CD4-positive, alpha-beta memory T cell (primary cell): ENCODE measurements at regions of chr19 and their contacts with region 1.

Region 1: GRCh38 chr19:5031231-5032100 is 62.6 kb downstream of the KDM4B start:
- DNase-seq: peak; percentile 67 to 80 (median 71)
- H3K4me3 ChIP-seq: no peak overlapping the region
- H3K4me3 Mint-ChIP-seq: no peak overlapping the region
- H3K27ac ChIP-seq: no peak overlapping the region
- H3K27ac Mint-ChIP-seq: peak overlapping the region in 1 of 7 donors; percentile 18
- H3K4me1 ChIP-seq: peaks cover 7% of the 10 kb centered on the region
- H3K4me1 Mint-ChIP-seq: peaks cover 0 to 17% (median 7%) of the 10 kb centered on the region in 4 donors
- H3K27me3 ChIP-seq: no peaks in the 10 kb centered on the region
- H3K27me3 Mint-ChIP-seq: no peaks in the 10 kb centered on the region

Region 2: DNA sequence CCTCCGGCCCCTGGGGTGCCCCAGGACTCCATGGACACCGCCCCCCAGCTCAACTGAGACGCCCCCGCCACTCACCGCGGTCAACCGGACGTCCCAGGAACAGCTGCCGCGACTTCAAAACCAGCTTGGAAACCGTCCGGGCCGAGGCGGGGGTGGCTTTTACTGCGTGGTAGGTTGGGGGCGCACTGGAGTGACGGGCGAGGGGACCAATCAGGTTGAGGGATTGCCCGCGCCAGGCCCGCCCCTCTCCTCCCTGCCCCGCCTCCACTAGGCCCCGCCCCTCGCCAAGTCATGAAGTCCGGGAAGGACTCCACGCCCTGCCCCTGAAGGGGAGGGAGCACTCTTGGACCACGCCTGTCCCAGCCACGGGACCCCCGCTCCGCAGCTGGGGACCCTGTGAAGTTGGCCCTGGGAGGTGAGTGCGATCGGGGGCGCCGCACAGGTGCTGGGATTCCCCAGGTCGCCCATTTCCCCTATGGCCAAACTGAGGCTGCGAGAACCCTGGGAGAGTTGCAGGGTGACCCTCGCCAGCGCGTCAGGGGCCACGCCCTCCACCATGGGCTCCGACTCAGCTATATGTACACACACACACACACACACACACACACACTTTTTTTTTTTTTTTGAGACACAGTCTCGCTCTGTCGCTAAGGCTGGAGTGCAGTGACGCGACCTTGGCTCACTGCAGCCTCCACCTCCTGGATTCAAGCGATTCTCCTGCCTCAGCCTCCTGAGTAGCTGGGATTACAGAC is 163.8 kb before region 1 on chr19 and contains the start of gene PLIN3:
- CTCF ChIA-PET with region 1: interaction called, 89 read pairs
- POLR2A ChIA-PET with region 1: interaction called, 5 read pairs
- intact Hi-C with region 1: no loop called
- DNase-seq: peak; percentile 78 to 89 (median 79)
- H3K4me3 ChIP-seq: peak within 1 kb of the TSS; percentile 60 to 76
- H3K4me3 Mint-ChIP-seq: peak within 1 kb of the TSS; percentile 85 to 92 (median 86)
- H3K27ac ChIP-seq: peak within 1 kb of the TSS; percentile 74
- H3K27ac Mint-ChIP-seq: peak within 1 kb of the TSS; percentile 79 to 91 (median 87)
- H3K4me1 ChIP-seq: peaks cover 10% of the 10 kb centered on the region
- H3K4me1 Mint-ChIP-seq: peaks cover 10 to 21% (median 14%) of the 10 kb centered on the region in 4 donors
- H3K27me3 ChIP-seq: no peaks in the 10 kb centered on the region
- H3K27me3 Mint-ChIP-seq: peaks cover 2 to 3% of the 10 kb centered on the region in 2 donors
- total RNA-seq, gene PLIN3: 16.0 to 18.2 TPM

Region 3: DNA sequence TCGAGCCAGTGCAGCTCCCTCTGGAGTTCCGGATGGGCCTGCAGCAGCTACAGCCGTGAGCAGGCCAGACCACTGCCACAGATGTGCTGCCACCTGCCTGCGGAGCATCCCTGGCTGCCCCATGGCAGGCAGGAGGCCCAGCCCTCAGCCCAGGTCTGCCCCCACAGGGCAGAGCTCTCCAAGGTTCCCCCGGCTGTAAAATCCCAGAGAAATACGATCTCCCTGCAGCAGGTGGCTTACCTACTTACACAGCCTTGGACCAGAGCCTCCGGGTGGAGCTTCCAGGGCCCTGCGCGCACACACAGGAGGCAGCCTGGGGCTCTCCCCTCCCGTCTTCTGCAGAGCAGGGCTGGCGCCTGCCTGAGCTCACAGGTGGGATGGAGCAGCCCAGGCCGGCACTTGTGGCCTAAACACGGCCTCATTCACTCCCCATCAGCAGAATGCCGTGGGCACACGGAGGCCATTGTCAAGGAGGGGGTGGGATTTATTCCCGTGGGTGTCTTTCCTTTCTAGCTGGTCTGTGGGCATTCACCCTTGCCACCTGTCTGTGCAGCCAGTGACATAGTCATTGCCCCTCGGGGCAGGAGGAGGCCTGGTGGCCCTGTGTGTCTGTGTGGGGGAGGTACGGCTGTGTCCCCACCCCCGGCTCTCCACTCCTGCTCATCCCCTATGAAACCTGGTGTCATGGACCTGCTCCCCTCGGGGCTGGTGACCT is 55.4 kb after region 1 on chr19:
- CTCF ChIA-PET with region 1: no interaction called
- POLR2A ChIA-PET with region 1: no interaction called
- intact Hi-C with region 1: no loop called
- DNase-seq: no peak
- H3K4me3 ChIP-seq: no peak overlapping the region
- H3K4me3 Mint-ChIP-seq: no peak overlapping the region
- H3K27ac ChIP-seq: no peak overlapping the region
- H3K27ac Mint-ChIP-seq: no peak overlapping the region
- H3K4me1 ChIP-seq: no peaks in the 10 kb centered on the region
- H3K4me1 Mint-ChIP-seq: peaks cover 0 to 5% (median under 1%) of the 10 kb centered on the region in 4 donors
- H3K27me3 ChIP-seq: no peaks in the 10 kb centered on the region
- H3K27me3 Mint-ChIP-seq: no peaks in the 10 kb centered on the region